ENCODE measurements at regions of chr11 and their contacts with region 1.

Region 1: DNA sequence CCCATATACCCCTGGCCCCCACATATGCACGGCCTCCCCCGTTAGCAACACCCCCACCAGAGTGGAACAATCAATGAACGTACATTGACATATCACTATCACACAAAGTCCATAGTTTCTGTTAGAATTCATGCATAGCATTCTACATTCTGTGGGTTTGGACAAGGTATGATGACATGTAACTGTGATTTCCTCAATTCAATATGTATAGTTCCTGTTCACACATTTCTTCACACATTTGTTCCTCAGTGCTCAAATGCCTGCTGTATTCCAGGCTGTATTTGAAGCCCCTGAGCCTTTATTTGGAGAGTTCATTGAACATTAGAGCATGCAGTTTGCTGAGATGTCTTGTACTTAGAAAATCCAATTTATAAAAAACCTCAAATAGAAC is 69.9 kb downstream of the PTPRJ start:
- DNase-seq: no peak
- H3K4me3 Mint-ChIP-seq: no peak overlapping the region
- H3K27ac Mint-ChIP-seq: no peak overlapping the region
- H3K4me1 Mint-ChIP-seq: peaks cover 65% of the 10 kb centered on the region
- H3K27me3 Mint-ChIP-seq: no peaks in the 10 kb centered on the region

Region 2: DNA sequence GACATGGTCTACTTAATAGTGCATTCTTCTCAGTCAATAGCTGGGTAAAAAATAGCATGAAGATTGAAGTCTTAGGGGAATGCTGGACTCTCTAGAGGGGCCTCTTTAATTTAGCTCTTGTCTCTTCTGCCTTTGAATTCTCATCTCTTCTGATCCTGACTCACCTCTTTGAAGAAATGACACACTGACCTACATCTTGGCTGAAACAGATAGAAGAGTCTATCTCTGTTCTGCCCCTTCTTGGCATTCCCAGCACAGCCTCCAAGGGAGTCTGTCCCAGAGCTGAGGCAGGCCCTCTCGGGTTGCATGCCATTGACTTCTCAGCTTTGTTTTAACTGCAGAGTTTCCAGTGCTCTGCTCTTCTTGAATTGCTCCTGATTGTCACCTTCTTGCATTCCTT is 14.3 kb before region 1 on chr11:
- CTCF ChIA-PET with region 1: interaction called, 3 read pairs
- POLR2A ChIA-PET with region 1: no interaction called
- intact Hi-C with region 1: loop called (anchors 2 kb)
- DNase-seq: no peak
- H3K4me3 Mint-ChIP-seq: no peak overlapping the region
- H3K27ac Mint-ChIP-seq: peak overlapping the region; percentile 36
- H3K4me1 Mint-ChIP-seq: peaks cover 56% of the 10 kb centered on the region
- H3K27me3 Mint-ChIP-seq: no peaks in the 10 kb centered on the region

Measured in activated CD4-positive, alpha-beta memory T cell treated with anti-CD3 and anti-CD28 coated beads for 36 hours (primary cell).